Endothelial cell of umbilical vein (primary cell): ENCODE measurements at regions of chr1 and their contacts with region 1.

Region 1: GRCh38 chr1:53220171-53220961 is at the start of gene CZIB:
- DNase-seq: peak; percentile 93
- H3K4me3 ChIP-seq: peak within 1 kb of the TSS; percentile 81 to 94 (median 83)
- H3K27ac ChIP-seq: peak within 1 kb of the TSS; percentile 54
- H3K4me1 ChIP-seq: peaks cover 19% of the 10 kb centered on the region
- H3K27me3 ChIP-seq: no peaks in the 10 kb centered on the region
- CTCF ChIP-seq: no peak
- POLR2A ChIP-seq: peak; percentile 89
- total RNA-seq, gene CZIB: 58.7 and 60.1 TPM in 2 replicates

Region 2: GRCh38 chr1:53196485-53197270 is 23.7 kb before region 1 on chr1 and contains the start of gene CPT2:
- CTCF ChIA-PET with region 1: no interaction called
- POLR2A ChIA-PET with region 1: no interaction called
- dilution Hi-C with region 1: no loop called
- intact Hi-C with region 1: loop called (anchors 1 kb)
- DNase-seq: peak; percentile 79
- H3K4me3 ChIP-seq: peak within 1 kb of the TSS; percentile 63 to 92 (median 77)
- H3K27ac ChIP-seq: peak within 1 kb of the TSS; percentile 74
- H3K4me1 ChIP-seq: peaks cover 13% of the 10 kb centered on the region
- H3K27me3 ChIP-seq: no peaks in the 10 kb centered on the region
- CTCF ChIP-seq: peak in 1 of 2 donors; percentile 3
- POLR2A ChIP-seq: peak; percentile 93
- total RNA-seq, gene CPT2: 10.4 and 11.6 TPM in 2 replicates

Region 3: DNA sequence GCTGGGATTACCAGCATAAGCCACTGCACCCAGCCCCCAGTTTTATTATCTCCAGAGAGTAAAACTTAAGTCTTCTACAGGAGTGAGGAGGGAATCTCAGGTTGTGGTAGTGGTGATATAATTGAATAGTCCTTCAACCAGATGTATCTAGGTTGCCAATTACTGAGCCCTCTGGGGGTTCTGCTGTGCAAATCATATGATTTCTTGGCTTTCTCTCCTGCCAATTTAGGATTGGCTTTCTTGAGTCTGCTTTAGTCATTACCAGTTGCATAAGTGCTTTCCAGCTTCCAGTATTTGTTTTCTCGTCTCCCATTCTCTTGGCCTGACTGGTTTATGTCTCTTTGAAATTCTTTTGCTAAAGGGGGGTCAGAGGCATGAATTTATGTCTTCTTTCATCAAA is 12.6 kb before region 1 on chr1:
- CTCF ChIA-PET with region 1: no interaction called
- POLR2A ChIA-PET with region 1: no interaction called
- dilution Hi-C with region 1: no loop called
- intact Hi-C with region 1: no loop called
- DNase-seq: no peak
- H3K4me3 ChIP-seq: no peak overlapping the region
- H3K27ac ChIP-seq: no peak overlapping the region
- H3K4me1 ChIP-seq: no peaks in the 10 kb centered on the region
- H3K27me3 ChIP-seq: no peaks in the 10 kb centered on the region
- CTCF ChIP-seq: no peak
- POLR2A ChIP-seq: no peak

Region 4: DNA sequence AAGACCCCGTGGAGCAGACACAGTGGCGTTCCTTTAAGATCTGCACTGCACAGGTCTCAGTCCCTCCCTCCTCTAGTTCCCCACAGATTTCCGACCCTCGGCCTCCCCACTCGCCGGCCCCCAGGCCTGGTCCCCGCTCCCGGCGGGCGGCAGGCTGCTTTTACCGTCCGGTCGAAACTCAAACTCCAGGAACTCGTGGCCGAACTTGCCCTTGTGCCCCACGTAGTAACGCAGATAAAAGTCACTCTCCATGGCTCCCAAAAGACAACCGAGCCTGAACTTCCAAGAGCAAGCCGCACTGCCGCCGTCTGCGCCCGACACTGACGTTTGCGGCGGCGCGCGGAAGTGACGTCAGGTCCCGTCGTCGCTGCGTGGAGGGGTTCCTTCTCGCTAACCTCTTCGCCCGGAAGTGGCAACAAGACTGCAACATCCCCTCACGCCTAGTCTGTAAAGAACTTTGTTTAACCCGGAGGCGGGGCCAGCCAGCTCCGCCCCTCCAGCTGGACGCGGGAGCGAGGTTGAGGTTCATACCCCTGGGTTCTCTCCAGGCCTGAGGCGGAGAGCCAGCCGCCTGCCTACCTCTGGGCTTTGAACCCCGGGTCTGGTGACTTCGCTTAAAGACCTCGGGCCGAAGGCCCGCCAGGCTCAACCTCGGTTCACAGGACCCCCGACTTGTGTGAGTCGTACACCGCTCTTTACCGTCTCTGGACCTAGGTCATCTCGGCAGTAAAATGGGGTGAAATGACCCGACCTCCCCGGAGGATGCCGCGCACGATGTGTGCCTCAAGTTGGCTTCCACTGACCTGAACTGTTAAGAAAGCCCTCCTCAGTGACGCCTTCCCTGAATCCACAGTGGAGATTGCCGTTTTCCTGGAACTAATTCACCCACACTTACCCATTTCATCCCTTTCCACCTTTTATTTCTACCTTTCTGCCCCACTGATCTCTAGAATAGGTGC is 18.1 kb after region 1 on chr1 and contains the start of gene MAGOH:
- CTCF ChIA-PET with region 1: interaction called, 4 read pairs
- POLR2A ChIA-PET with region 1: interaction called, 3 read pairs
- dilution Hi-C with region 1: no loop called
- intact Hi-C with region 1: loop called (anchors 1 kb)
- DNase-seq: peak; percentile 97
- H3K4me3 ChIP-seq: peak within 1 kb of the TSS; percentile 82 to 97 (median 89)
- H3K27ac ChIP-seq: peak within 1 kb of the TSS; percentile 81
- H3K4me1 ChIP-seq: peaks cover 8% of the 10 kb centered on the region
- H3K27me3 ChIP-seq: no peaks in the 10 kb centered on the region
- CTCF ChIP-seq: no peak
- POLR2A ChIP-seq: peak; percentile 85
- total RNA-seq, gene MAGOH: 59.8 and 60.1 TPM in 2 replicates